HCT116 (cell line): ENCODE measurements at regions of chr4 and their contacts with region 1.

Region 1: GRCh38 chr4:124262211-124263179 is 450.0 kb downstream of the ANKRD50 start:
- DNase-seq: peak; percentile 79
- ATAC-seq: peak; percentile 98
- H3K4me3 ChIP-seq: no peak overlapping the region
- H3K27ac ChIP-seq: no peak overlapping the region
- H3K4me1 ChIP-seq: no peaks in the 10 kb centered on the region
- H3K27me3 ChIP-seq: no peaks in the 10 kb centered on the region
- CTCF ChIP-seq: peak; percentile 64 to 92 (median 82); a peak in 5 of 6 replicates
- POLR2A ChIP-seq: no peak
- RAD21 ChIP-seq: peak; percentile 90

Region 2: GRCh38 chr4:122922877-122923511 is 1339.5 kb before region 1 on chr4:
- CTCF ChIA-PET with region 1: no interaction called
- POLR2A ChIA-PET with region 1: no interaction called
- RAD21 ChIA-PET with region 1: no interaction called
- intact Hi-C with region 1: loop called (anchors 10 kb)
- DNase-seq: peak; percentile 73
- ATAC-seq: peak; percentile 91
- H3K4me3 ChIP-seq: peak overlapping the region; percentile 86 to 97
- H3K27ac ChIP-seq: peak overlapping the region; percentile 76
- H3K4me1 ChIP-seq: peaks cover 7 to 15% of the 10 kb centered on the region in 2 experiments; a peak in 3 of 4 replicates
- H3K27me3 ChIP-seq: no peaks in the 10 kb centered on the region
- CTCF ChIP-seq: no peak
- POLR2A ChIP-seq: peak; percentile 53
- RAD21 ChIP-seq: no peak

Region 3: GRCh38 chr4:123127218-123127617 is 1135.3 kb before region 1 on chr4:
- CTCF ChIA-PET with region 1: no interaction called
- POLR2A ChIA-PET with region 1: no interaction called
- RAD21 ChIA-PET with region 1: no interaction called
- intact Hi-C with region 1: loop called (anchors 5 kb)
- DNase-seq: no peak
- ATAC-seq: no peak
- H3K4me3 ChIP-seq: no peak overlapping the region
- H3K27ac ChIP-seq: no peak overlapping the region
- H3K4me1 ChIP-seq: no peaks in the 10 kb centered on the region
- H3K27me3 ChIP-seq: no peaks in the 10 kb centered on the region
- CTCF ChIP-seq: peak in 1 of 3 experiments; percentile 29; a peak in 2 of 6 replicates
- POLR2A ChIP-seq: no peak
- RAD21 ChIP-seq: peak; percentile 51

Region 4: DNA sequence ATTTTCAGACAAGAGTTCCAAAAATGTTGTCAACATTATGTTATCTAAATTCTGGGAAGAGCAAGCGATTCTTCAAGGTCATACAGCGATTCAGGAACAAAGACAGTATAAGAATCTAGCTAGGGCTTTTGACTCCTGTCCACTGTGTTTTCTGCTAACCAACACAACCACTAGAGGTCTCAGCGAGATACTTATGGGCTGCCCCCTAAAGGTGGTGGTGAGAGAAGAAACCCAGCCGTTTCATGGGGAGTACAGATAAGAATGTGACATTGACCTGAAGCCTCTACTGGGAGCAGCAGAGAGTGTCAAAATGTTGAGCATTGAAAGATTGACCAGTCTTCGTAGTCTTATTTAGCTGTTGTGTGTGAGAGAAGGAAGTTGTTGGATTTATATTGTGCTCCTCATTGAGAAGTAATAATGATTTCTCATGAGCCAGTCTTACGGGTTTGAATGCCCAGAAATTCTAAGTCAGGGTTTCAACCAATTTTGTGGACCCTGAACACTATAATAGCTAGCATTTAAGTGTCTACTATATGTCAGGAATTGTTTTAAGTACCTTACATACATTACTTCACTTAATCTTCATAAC is 697.6 kb before region 1 on chr4:
- CTCF ChIA-PET with region 1: no interaction called
- POLR2A ChIA-PET with region 1: no interaction called
- RAD21 ChIA-PET with region 1: no interaction called
- intact Hi-C with region 1: loop called (anchors 10 kb)
- DNase-seq: peak; percentile 75
- ATAC-seq: peak; percentile 100
- H3K4me3 ChIP-seq: no peak overlapping the region
- H3K27ac ChIP-seq: no peak overlapping the region
- H3K4me1 ChIP-seq: peaks cover 0 to 4% of the 10 kb centered on the region in 2 experiments; a peak in 2 of 4 replicates
- H3K27me3 ChIP-seq: no peaks in the 10 kb centered on the region
- CTCF ChIP-seq: peak; percentile 99
- POLR2A ChIP-seq: no peak
- RAD21 ChIP-seq: peak; percentile 74

Region 5: GRCh38 chr4:124121461-124121934 is 141.0 kb before region 1 on chr4:
- CTCF ChIA-PET with region 1: no interaction called
- POLR2A ChIA-PET with region 1: no interaction called
- RAD21 ChIA-PET with region 1: no interaction called
- intact Hi-C with region 1: loop called (anchors 5 kb)
- DNase-seq: no peak
- ATAC-seq: no peak
- H3K4me3 ChIP-seq: no peak overlapping the region
- H3K27ac ChIP-seq: no peak overlapping the region
- H3K4me1 ChIP-seq: no peaks in the 10 kb centered on the region
- H3K27me3 ChIP-seq: no peaks in the 10 kb centered on the region
- CTCF ChIP-seq: no peak
- POLR2A ChIP-seq: no peak
- RAD21 ChIP-seq: no peak

Region 6: GRCh38 chr4:124722071-124722470 is 459.6 kb after region 1 on chr4:
- CTCF ChIA-PET with region 1: no interaction called
- POLR2A ChIA-PET with region 1: no interaction called
- RAD21 ChIA-PET with region 1: no interaction called
- intact Hi-C with region 1: no loop called
- DNase-seq: no peak
- ATAC-seq: no peak
- H3K4me3 ChIP-seq: no peak overlapping the region
- H3K27ac ChIP-seq: no peak overlapping the region
- H3K4me1 ChIP-seq: peaks cover 0 to 13% of the 10 kb centered on the region in 2 experiments; a peak in 2 of 4 replicates
- H3K27me3 ChIP-seq: no peaks in the 10 kb centered on the region
- CTCF ChIP-seq: no peak
- POLR2A ChIP-seq: no peak
- RAD21 ChIP-seq: no peak